ENCODE measurements at regions of chr15 and their contacts with region 1.

Region 1: GRCh38 chr15:39666677-39667076 is 85.8 kb downstream of the THBS1 start:
- DNase-seq: no peak
- ATAC-seq: no peak
- H3K4me3 Mint-ChIP-seq: no peak overlapping the region
- H3K27ac Mint-ChIP-seq: no peak overlapping the region
- H3K4me1 Mint-ChIP-seq: no peaks in the 10 kb centered on the region
- H3K27me3 Mint-ChIP-seq: peaks cover 6% of the 10 kb centered on the region

Region 2: GRCh38 chr15:39602143-39602542 is 64.5 kb before region 1 on chr15:
- CTCF ChIA-PET with region 1: no interaction called
- POLR2A ChIA-PET with region 1: no interaction called
- intact Hi-C with region 1: loop called in 1 of 2 experiments (anchors 5 kb)
- DNase-seq: no peak
- ATAC-seq: no peak
- H3K4me3 Mint-ChIP-seq: no peak overlapping the region
- H3K27ac Mint-ChIP-seq: no peak overlapping the region
- H3K4me1 Mint-ChIP-seq: no peaks in the 10 kb centered on the region
- H3K27me3 Mint-ChIP-seq: peaks cover 4% of the 10 kb centered on the region

Region 3: GRCh38 chr15:39631357-39631756 is 35.3 kb before region 1 on chr15:
- CTCF ChIA-PET with region 1: no interaction called
- POLR2A ChIA-PET with region 1: no interaction called
- intact Hi-C with region 1: no loop called
- DNase-seq: peak; percentile 47
- ATAC-seq: peak; percentile 38
- H3K4me3 Mint-ChIP-seq: no peak overlapping the region
- H3K27ac Mint-ChIP-seq: peak overlapping the region; percentile 66
- H3K4me1 Mint-ChIP-seq: peaks cover 43% of the 10 kb centered on the region
- H3K27me3 Mint-ChIP-seq: peaks cover 2% of the 10 kb centered on the region

Measured in activated CD4-positive, alpha-beta T cell treated with anti-CD3 and anti-CD28 coated beads for 36 hours (primary cell).